GM12878 (cell line): ENCODE measurements at regions of chr1 and their contacts with region 1.

Region 1: DNA sequence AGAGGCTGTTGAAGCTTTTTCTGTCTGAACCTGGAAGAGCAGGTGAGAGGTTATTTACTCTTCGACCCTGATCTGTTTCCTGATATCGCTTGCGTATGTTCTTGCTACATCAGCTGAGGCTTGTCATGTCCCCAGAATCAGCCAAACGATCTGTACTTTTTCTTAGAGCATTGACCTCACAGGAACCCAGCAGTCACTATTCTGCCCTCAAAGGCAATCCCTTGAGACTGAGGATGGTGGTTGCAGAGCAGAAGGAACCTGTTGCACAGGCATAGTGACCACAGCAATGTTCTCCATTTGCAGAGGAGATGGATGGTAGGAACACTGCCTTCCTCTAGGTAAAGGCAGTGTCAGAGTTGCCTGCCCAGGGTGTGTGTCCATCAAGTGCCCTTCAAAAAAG is 11.3 kb upstream of the LACTBL1 start:
- DNase-seq: no peak
- ATAC-seq: no peak
- H3K4me3 ChIP-seq: no peak overlapping the region
- H3K27ac ChIP-seq: no peak overlapping the region
- H3K4me1 ChIP-seq: no peaks in the 10 kb centered on the region
- H3K27me3 ChIP-seq: no peaks in the 10 kb centered on the region
- CTCF ChIP-seq: no peak
- EP300 ChIP-seq: no peak
- POLR2A ChIP-seq: no peak
- RAD21 ChIP-seq: no peak

Region 2: DNA sequence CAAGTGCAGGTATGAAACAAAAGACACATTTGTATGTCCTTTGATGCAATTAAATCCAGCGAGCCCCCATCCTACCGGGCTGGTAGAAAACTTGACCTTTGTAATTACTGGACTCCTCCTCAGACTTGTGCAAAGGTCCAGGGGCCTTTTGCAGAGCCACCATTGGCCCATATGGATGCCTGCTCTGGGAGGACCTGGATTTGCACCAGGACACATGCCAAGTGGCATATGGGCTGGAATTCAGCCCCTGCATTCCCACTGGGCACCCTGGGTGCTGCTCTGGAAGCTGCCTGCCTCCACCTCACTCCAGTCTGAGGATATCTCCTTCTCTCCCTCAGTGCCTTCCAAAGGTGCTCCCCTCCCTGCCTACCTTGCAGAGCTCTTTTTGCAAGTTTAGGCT is 47.3 kb before region 1 on chr1:
- CTCF ChIA-PET with region 1: no interaction called
- POLR2A ChIA-PET with region 1: no interaction called
- RAD21 ChIA-PET with region 1: no interaction called
- SMC1A ChIA-PET with region 1: no interaction called
- in situ Hi-C with region 1: no loop called
- intact Hi-C with region 1: no loop called
- DNase-seq: no peak
- ATAC-seq: no peak
- H3K4me3 ChIP-seq: no peak overlapping the region
- H3K27ac ChIP-seq: no peak overlapping the region
- H3K4me1 ChIP-seq: no peaks in the 10 kb centered on the region
- H3K27me3 ChIP-seq: no peaks in the 10 kb centered on the region; a peak in 1 of 4 replicates
- CTCF ChIP-seq: no peak
- EP300 ChIP-seq: no peak
- POLR2A ChIP-seq: no peak
- RAD21 ChIP-seq: no peak

Region 3: DNA sequence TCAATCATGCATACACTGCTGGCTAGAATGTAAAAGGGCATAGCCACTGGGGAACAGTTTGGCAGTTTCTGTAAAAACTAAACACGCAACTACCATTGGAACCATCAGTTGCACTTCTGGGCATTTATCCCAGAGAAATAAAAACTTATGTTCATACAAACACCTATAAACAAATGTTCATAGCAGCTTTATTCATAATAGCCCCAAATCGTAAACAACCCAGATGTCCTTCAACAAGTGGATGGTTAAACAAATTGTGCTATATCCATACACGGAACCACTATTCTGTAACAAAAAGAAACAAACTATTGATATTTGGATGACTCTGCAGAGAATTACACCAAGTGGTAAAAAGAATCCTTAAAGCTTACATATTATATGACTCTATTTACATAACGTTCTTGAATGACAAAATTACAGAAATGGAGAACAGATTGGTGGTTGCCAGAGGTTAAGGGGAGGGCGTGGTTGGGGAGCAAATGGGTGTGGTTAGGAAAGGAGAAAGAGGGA is 34.1 kb before region 1 on chr1:
- CTCF ChIA-PET with region 1: no interaction called
- POLR2A ChIA-PET with region 1: no interaction called
- RAD21 ChIA-PET with region 1: no interaction called
- SMC1A ChIA-PET with region 1: no interaction called
- in situ Hi-C with region 1: no loop called
- intact Hi-C with region 1: no loop called
- DNase-seq: no peak
- ATAC-seq: no peak
- H3K4me3 ChIP-seq: no peak overlapping the region
- H3K27ac ChIP-seq: no peak overlapping the region
- H3K4me1 ChIP-seq: no peaks in the 10 kb centered on the region
- H3K27me3 ChIP-seq: 0 out of 4 replicates have a peak, but pooled peaks cover 0 to 2% of the 10 kb centered on the region in 2 experiments
- CTCF ChIP-seq: no peak
- EP300 ChIP-seq: no peak
- POLR2A ChIP-seq: no peak
- RAD21 ChIP-seq: no peak

Region 4: GRCh38 chr1:23196639-23197328 is 212.8 kb after region 1 on chr1:
- CTCF ChIA-PET with region 1: no interaction called
- POLR2A ChIA-PET with region 1: interaction called, 13 read pairs
- RAD21 ChIA-PET with region 1: no interaction called
- SMC1A ChIA-PET with region 1: no interaction called
- in situ Hi-C with region 1: no loop called
- intact Hi-C with region 1: no loop called
- DNase-seq: no peak
- ATAC-seq: no peak
- H3K4me3 ChIP-seq: no peak overlapping the region
- H3K27ac ChIP-seq: no peak overlapping the region
- H3K4me1 ChIP-seq: peaks cover 3% of the 10 kb centered on the region; the same call in 1 of the 2 replicates
- H3K27me3 ChIP-seq: no peaks in the 10 kb centered on the region
- CTCF ChIP-seq: no peak
- EP300 ChIP-seq: no peak
- POLR2A ChIP-seq: no peak
- RAD21 ChIP-seq: no peak